ENCODE measurements at regions of chr17 and their contacts with region 1.

Region 1: DNA sequence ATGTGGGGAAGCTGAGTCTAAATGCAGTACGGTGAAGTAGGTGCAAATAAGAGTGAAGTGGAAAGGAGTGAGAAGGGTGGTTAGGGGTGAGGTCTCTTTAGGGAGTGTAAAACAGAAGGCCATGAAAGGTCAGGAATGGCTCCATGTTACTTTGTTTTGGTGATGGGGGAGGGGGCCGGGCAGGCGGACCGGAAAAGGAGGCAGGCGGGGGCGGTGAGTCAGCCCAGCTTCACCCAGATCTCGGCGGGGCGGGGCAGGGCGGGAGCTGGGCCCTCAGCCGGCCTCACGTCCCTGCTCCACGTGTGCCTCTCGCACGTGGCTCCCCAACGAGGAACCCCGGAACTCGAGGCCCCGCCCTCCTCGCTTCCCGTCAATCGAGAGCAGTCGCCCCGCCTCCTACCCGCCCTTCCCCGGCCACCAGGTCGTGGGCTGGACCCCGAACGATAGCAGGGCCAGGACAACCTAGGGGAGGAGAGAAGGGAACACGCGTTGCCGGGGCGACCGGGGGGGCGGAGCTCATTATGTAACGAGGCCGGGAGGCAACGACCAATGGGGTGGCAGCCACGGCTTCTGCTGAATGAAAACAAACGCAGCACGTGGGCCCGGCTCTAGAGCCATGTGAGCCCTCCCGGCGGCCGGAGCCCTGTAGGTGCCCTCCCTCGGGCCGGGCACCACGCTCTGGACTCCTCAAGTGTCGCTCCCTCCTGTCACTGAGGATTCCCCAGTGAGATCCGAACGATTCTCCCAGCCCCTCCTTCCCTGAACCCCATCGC is 1.4 kb downstream of the NR1D1 start:
- DNase-seq: peak; percentile 86
- H3K4me3 Mint-ChIP-seq: peak overlapping the region; percentile 92
- H3K27ac Mint-ChIP-seq: peak overlapping the region; percentile 85
- H3K4me1 Mint-ChIP-seq: peaks cover 81% of the 10 kb centered on the region
- H3K27me3 Mint-ChIP-seq: peaks cover 11% of the 10 kb centered on the region

Region 2: GRCh38 chr17:39769974-39770587 is 329.0 kb before region 1 on chr17:
- intact Hi-C with region 1: loop called (anchors 10 kb)
- DNase-seq: peak; percentile 63
- H3K4me3 Mint-ChIP-seq: peak overlapping the region; percentile 38
- H3K27ac Mint-ChIP-seq: peak overlapping the region; percentile 56
- H3K4me1 Mint-ChIP-seq: peaks cover 93% of the 10 kb centered on the region
- H3K27me3 Mint-ChIP-seq: no peaks in the 10 kb centered on the region

Region 3: GRCh38 chr17:40062329-40063186 is 36.5 kb before region 1 on chr17 and contains the start of gene THRA:
- intact Hi-C with region 1: no loop called
- DNase-seq: peak; percentile 54
- H3K4me3 Mint-ChIP-seq: peak within 1 kb of the TSS; percentile 86
- H3K27ac Mint-ChIP-seq: peak within 1 kb of the TSS; percentile 29
- H3K4me1 Mint-ChIP-seq: peaks cover 33% of the 10 kb centered on the region
- H3K27me3 Mint-ChIP-seq: peaks cover 43% of the 10 kb centered on the region
- total RNA-seq, gene THRA: 2.9 and 3.5 TPM in 2 replicates

Region 4: DNA sequence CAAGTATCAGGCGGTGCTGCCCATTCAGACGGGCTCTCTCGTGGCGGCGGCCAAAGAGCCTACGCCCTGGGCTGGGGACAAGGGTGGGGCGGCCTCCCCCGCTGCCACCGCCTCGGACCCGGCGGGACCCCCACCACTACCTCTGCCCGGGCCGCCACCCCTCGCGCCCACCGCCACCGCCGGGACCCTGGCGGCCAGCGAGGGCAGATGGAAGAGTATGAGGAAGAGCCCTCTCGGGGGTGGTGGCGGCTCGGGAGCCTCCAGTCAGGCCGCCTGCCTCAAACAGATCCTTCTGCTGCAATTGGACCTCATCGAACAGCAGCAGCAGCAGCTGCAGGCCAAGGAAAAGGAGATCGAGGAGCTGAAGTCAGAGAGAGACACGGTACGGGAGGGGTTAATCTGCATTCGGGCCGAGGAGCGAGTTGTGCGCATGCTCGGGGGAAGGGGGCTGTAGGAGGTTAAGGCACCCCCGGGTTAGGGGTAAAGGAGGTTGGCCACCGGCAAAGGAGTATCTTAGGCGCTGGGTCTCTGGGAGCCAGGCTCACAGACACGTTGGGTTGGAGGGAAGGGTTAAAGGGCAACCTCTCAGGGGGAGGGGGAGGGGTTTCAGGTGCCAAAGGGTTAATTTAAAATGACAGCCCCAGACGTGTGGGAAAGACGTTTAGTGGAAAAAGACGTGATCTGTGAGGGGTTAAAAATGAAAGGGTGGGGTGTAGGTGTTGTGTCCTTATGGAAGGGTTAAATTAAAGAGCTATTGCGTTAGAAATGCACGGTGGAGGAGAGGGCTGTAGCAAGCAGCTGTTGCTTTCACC is 24.2 kb after region 1 on chr17:
- intact Hi-C with region 1: loop called (anchors 1 kb)
- DNase-seq: peak; percentile 55
- H3K4me3 Mint-ChIP-seq: peak overlapping the region; percentile 97
- H3K27ac Mint-ChIP-seq: peak overlapping the region; percentile 94
- H3K4me1 Mint-ChIP-seq: peaks cover 40% of the 10 kb centered on the region
- H3K27me3 Mint-ChIP-seq: no peaks in the 10 kb centered on the region

Region 5: DNA sequence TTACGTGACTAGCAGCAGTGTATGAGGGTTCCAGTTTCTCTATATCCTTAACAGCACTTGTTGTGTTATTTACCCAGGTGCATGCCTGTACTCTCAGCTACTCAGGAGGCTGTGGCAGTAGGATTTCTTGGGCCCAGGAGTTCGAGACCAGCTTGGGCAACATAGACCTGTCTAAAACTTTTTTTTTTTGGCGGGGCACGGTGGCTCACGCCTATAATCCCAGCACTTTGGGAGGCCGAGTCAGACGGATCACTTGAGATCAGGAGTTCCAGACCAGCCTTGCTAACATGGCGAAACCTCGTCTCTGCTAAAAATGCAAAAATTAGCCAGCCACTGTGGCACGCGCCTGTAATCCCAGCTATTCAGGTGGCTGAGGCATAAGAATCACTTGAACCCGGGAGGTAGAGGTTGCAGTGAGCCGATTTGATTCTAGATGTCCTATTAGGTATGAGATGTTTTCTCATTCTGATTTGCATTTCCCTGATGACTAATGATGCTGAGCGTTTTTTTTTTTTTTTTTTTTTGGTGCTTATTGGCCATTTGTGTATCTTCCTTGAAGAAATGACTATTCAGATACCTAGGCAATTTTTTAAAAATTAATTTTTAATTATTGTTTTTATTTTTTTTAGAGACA is 54.7 kb after region 1 on chr17:
- intact Hi-C with region 1: loop called (anchors 1 kb)
- DNase-seq: no peak
- H3K4me3 Mint-ChIP-seq: no peak overlapping the region
- H3K27ac Mint-ChIP-seq: peak overlapping the region; percentile 98
- H3K4me1 Mint-ChIP-seq: peaks cover 51% of the 10 kb centered on the region
- H3K27me3 Mint-ChIP-seq: no peaks in the 10 kb centered on the region

Measured in activated T-helper 1 cell treated with anti-CD3 and anti-CD28 coated beads, Interleukin-12 subunit alpha, Interleukin-12 subunit beta, Interleukin-2, Interleukin-4 antibody, amounts not matched to agents 30 ng/mL and 10 ng/mL and 1 ng/mL, durations not matched to agents 14 hours and 24 hours and 36 hours (primary cell).